Panc1 (cell line): ENCODE measurements at regions of chr1 and their contacts with region 1.

Region 1: DNA sequence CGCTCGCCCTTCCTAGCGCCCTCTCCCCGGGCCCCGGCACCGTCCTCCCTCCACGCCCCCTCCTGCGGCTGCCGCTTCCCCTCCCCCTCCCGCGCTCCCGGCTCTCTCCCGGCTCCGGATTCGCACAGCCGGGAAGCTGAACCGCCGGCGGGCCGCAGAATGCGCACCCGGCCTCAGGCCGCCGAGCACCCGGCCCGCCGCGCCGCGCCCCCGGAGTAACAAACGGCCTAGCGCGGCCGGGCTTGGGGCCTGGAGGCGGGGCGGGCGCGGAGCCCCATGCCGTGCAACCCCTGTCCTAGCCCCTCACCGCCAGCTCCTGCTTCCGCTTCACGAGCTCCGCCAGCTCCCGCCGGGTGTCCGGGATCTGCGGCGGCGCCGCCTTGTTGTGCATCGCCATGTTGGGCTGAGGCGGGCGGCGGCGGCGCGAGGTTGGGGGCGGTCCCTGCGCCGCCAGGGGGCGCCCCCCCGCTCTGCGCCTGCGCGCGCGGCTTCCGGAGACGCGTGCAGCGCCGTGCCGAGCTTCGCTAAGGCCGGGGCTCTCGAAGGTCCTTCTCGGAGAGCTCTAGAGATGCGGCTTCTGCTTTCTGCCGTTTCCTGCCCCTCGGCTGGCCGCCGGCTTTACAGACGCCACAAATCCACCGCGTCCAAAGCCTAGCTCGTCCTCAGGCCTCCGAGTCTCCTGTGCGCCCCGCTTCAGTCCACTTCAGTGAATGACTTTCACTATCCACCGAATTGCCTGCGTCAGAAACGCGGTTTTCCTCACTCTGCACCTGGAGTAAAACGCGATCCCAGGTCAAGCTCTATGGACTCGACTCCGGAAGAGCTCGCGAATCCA is at the start of gene MEAF6:
- DNase-seq: no peak
- ATAC-seq: peak; percentile 99
- H3K4me3 ChIP-seq: peak within 1 kb of the TSS; percentile 83 to 84
- H3K27ac ChIP-seq: peak within 1 kb of the TSS; percentile 98
- H3K4me1 ChIP-seq: peaks cover 13% of the 10 kb centered on the region
- H3K27me3 ChIP-seq: no peaks in the 10 kb centered on the region
- CTCF ChIP-seq: peak; percentile 93
- total RNA-seq, gene MEAF6: 50.0 TPM

Region 2: DNA sequence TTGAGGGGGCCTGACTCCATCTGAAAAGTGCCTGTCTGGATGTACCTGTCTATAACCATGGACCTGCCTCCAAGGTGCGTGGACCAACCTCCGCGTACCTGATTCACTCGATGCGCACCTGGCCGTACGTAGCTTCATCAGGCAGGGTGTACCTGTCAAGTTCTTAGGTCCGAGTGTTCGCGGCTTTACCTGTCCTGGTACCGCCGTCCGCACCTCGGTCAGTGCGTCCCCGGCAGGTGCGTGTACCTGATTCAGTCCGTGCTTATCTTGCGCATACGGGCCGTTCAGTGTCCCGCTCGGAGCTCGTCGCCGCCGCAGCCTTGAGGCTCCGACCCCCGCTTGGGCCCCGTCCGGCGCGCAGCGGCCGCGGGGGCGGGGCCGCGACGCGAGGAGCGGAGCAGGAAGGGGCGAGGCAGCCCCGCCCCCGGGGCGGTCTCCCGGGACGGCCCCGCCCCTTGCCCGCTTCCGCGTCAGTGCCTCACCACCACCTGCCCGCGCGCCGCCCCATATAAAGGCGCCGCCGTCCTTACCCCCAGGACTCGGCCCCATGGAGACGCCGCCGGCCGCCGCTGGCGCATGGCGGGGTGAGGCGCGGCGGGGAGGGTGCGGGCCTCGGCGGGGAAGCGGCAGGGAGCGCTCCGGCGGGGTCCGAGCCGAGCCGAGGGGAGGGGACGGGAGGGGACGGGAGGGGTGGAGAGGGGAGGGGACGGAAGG is 40.4 kb before region 1 on chr1 and contains the start of gene ZC3H12A:
- CTCF ChIA-PET with region 1: interaction called, 11 read pairs
- POLR2A ChIA-PET with region 1: no interaction called
- in situ Hi-C with region 1: no loop called
- intact Hi-C with region 1: no loop called
- DNase-seq: no peak
- ATAC-seq: peak; percentile 74
- H3K4me3 ChIP-seq: peak within 1 kb of the TSS; percentile 74 to 78
- H3K27ac ChIP-seq: peak within 1 kb of the TSS; percentile 89
- H3K4me1 ChIP-seq: peaks cover 67% of the 10 kb centered on the region
- H3K27me3 ChIP-seq: no peaks in the 10 kb centered on the region
- CTCF ChIP-seq: no peak
- total RNA-seq, gene ZC3H12A: 9.4 TPM

Region 3: DNA sequence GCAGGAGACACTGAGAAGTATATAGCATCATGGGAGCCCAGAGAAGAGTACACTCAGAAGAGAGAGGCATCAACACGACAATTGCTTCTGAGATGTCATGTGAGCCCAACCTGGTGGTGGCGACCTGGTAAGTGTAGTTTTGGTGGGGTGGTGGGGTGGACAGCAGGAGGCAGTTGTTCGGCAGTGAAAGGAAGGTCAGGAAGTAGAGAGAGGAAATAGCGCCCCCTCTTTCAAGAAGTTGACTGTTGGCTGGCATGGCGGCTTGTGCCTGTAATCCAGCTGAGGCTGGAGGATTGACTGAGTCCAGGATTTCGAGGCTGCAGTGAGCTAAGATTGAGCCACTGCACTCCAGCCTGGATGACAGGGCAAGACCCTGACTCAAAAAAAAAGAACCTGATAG is 107.6 kb after region 1 on chr1:
- CTCF ChIA-PET with region 1: no interaction called
- POLR2A ChIA-PET with region 1: no interaction called
- in situ Hi-C with region 1: no loop called
- intact Hi-C with region 1: no loop called
- DNase-seq: no peak
- ATAC-seq: no peak
- H3K4me3 ChIP-seq: no peak overlapping the region
- H3K27ac ChIP-seq: no peak overlapping the region
- H3K4me1 ChIP-seq: no peaks in the 10 kb centered on the region
- H3K27me3 ChIP-seq: peaks cover 10% of the 10 kb centered on the region
- CTCF ChIP-seq: no peak

Region 4: DNA sequence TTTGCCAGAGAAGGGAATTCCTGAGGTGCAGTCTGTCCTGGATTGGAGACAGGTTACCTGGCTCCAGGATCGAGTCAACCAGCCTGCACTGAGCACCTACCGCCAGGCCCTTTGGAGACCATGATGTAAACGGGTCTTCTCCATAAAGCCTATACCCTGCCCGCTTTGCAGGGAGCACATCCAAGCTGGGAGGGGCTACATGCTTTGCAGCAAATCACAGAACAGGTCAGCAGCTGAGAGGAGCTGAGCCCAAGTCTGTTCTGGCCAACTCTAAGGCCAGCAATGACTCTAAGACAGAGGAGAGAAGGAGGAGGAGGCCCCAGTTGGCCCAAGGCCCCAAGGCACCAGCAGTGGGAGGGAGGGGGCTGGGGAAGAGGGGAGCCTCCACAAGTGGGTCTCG is 135.6 kb after region 1 on chr1:
- CTCF ChIA-PET with region 1: no interaction called
- POLR2A ChIA-PET with region 1: no interaction called
- in situ Hi-C with region 1: no loop called
- intact Hi-C with region 1: no loop called
- DNase-seq: no peak
- ATAC-seq: peak; percentile 46; the same call in 1 of the 2 replicates
- H3K4me3 ChIP-seq: no peak overlapping the region
- H3K27ac ChIP-seq: no peak overlapping the region
- H3K4me1 ChIP-seq: no peaks in the 10 kb centered on the region
- H3K27me3 ChIP-seq: no peaks in the 10 kb centered on the region
- CTCF ChIP-seq: no peak